Dendritic cell treated with granulocyte-macrophage colony-stimulating factor and Interleukin-4, amounts not matched to agents 40 ng/mL and 50 ng/mL, for 4 days (primary cell): ENCODE measurements at regions of chr14 and their contacts with region 1.

Region 1: DNA sequence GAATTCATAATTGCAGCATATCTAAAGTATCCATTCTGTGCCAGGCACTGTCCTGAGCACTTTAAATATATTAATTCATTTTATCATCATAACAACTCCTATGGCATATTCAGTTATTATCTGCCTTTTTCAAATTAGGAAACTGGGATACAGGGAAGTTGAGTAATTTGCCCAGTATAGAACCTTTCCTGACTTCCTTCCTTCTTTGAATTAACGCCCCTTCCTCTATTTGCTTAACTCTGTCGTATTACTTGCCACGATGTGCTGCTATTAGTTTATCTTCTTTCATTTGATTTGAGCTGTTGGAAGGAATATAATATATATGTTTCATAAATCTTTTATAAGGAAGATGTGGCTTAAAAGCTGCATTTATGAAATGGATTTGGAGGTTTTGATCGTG is 25.4 kb upstream of the FAM177A1 start:
- H3K4me3 Mint-ChIP-seq: no peak overlapping the region
- H3K27ac Mint-ChIP-seq: no peak overlapping the region
- H3K4me1 Mint-ChIP-seq: peaks cover 11% of the 10 kb centered on the region
- H3K27me3 Mint-ChIP-seq: no peaks in the 10 kb centered on the region

Region 2: DNA sequence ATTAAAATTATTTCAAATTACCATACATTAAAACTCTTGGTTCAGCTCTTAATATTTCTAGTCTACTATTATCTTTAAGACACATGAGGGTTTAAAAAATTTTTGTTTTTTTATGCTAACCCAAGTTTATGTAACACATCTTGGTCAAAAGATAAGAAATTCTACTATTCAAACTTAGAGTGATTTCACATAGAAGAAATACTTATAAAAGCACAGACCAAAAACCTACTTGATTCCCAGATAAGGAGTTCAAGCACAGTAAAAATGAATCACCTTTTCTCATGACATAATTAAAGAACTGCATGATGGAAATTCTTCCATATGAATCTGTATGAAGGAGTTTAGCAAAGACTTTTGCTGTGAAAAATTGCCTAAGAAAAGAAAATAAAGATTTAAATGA is 87.2 kb after region 1 on chr14:
- intact Hi-C with region 1: loop called (anchors 5 kb)
- H3K4me3 Mint-ChIP-seq: no peak overlapping the region
- H3K27ac Mint-ChIP-seq: no peak overlapping the region
- H3K4me1 Mint-ChIP-seq: no peaks in the 10 kb centered on the region
- H3K27me3 Mint-ChIP-seq: no peaks in the 10 kb centered on the region